IMR-90 (cell line): ENCODE measurements at regions of chr3 and their contacts with region 1.

Region 1: DNA sequence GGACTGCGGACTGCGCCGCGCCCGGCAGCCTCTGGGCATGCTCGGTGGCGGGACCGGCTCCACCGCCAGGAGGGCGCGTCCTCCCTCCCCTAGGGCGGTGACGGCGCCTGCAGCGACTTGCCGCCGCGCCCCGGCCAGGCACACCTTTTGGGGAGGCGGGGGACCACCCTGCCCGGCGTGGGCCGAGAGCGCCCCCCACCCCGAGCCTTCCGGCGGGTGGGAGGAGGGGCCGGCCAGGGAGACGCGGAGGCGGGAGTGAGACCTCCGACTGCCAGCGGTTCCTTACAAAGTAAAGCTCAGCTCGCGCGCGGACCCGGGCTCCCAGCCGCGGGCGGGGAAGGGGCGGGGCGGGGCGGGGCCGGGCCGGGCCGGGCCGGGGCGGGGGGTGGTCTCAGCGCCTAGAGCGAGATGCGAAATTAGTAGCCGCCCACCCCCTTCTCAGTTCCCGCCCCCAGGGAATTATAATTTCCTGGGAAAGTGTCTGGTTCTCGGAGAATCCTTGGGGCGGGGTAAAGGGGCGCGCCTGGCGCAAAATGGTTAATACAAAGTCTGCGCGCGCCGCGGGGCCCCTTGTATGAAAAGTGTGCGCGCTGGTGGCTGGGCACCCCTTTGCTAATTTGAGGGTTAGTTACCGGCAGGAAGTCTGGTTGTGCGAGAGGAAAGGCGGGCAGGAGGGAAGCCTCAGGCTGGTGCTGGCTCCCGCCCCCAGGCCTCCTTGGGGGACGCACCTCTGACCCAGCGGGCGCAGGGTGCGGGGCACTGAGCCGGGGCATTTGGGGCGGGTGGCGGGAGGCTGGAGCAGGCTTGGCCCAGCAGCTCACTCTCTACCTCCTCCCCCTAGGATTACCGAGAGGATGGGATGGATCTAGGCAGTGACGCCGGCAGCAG is 224.8 kb upstream of the IL12A start:
- DNase-seq: peak; percentile 84
- ATAC-seq: peak; percentile 68
- H3K4me3 ChIP-seq: peak overlapping the region; percentile 65
- H3K27ac ChIP-seq: peak overlapping the region; percentile 91
- H3K4me1 ChIP-seq: peaks cover 14% of the 10 kb centered on the region
- H3K27me3 ChIP-seq: no peaks in the 10 kb centered on the region
- CTCF ChIP-seq: no peak
- POLR2A ChIP-seq: peak; percentile 74
- RAD21 ChIP-seq: 0 out of 2 replicates have a peak, but pooled peaks have one; percentile 10

Region 2: DNA sequence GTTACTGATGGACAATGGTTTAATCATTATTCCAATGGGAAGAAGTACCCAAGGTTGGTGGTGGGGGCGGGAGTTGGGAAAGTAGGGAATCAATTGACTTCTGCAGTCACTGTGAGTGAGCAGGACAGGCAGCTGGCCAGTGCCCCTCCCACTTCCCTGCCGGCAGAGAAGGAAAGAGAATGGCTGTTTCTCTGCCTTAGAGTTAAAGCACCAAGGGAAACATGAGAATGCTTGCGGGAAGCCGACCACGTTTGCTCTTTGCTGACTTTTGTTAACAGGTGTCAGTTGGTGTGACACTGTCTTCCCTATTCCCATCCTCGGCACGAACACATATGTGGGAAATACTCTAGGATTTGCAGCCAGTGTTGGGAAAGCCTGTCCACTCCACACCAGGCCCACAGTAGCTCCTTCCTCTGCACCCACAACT is 995.5 kb before region 1 on chr3:
- CTCF ChIA-PET with region 1: no interaction called
- POLR2A ChIA-PET with region 1: no interaction called
- dilution Hi-C with region 1: no loop called
- in situ Hi-C with region 1: no loop called
- intact Hi-C with region 1: no loop called
- DNase-seq: peak; percentile 78
- ATAC-seq: peak; percentile 61
- H3K4me3 ChIP-seq: no peak overlapping the region
- H3K27ac ChIP-seq: peak overlapping the region; percentile 96
- H3K4me1 ChIP-seq: peaks cover 21% of the 10 kb centered on the region
- H3K27me3 ChIP-seq: no peaks in the 10 kb centered on the region
- CTCF ChIP-seq: 0 out of 2 replicates have a peak, but pooled peaks have one; percentile 0
- POLR2A ChIP-seq: no peak
- RAD21 ChIP-seq: no peak

Region 3: GRCh38 chr3:159322322-159322939 is 441.4 kb before region 1 on chr3:
- CTCF ChIA-PET with region 1: no interaction called
- POLR2A ChIA-PET with region 1: no interaction called
- dilution Hi-C with region 1: no loop called
- in situ Hi-C with region 1: no loop called
- intact Hi-C with region 1: loop called (anchors 2 kb)
- DNase-seq: peak; percentile 20
- ATAC-seq: peak; percentile 77
- H3K4me3 ChIP-seq: no peak overlapping the region
- H3K27ac ChIP-seq: no peak overlapping the region
- H3K4me1 ChIP-seq: no peaks in the 10 kb centered on the region
- H3K27me3 ChIP-seq: no peaks in the 10 kb centered on the region
- CTCF ChIP-seq: peak; percentile 72
- POLR2A ChIP-seq: no peak
- RAD21 ChIP-seq: peak; percentile 59

Region 4: DNA sequence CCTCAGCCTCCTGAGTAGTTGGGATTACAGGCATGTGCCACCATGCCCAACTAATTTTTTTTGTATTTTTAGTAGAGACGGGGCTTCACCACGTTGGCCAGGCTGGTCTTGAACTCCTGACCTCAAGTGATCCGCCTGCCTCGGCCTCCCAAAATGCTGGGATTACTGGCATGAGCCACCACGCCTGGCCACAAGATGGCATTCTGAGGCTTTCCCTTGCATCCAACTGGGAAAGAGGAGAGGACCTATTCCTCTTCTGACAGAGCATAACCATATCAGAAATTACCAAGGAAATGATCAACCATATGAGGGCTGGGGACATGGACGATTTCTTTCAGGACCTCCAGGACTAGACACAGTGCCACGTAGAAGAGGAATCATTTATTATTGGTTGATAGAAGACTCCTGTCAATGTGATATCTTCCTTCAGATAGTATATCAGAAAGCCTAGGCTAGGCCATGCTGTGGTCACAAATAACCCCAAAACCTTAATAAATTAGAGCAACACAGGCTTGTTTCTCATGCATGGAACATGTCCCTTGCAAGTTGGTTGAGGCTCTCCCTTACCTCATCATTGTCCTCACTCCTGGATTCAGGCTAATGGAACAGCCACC is 147.5 kb before region 1 on chr3:
- CTCF ChIA-PET with region 1: no interaction called
- POLR2A ChIA-PET with region 1: interaction called, 3 read pairs
- dilution Hi-C with region 1: no loop called
- in situ Hi-C with region 1: no loop called
- intact Hi-C with region 1: loop called (anchors 1 kb)
- DNase-seq: peak; percentile 68
- ATAC-seq: peak; percentile 70
- H3K4me3 ChIP-seq: no peak overlapping the region
- H3K27ac ChIP-seq: no peak overlapping the region
- H3K4me1 ChIP-seq: peaks cover 14% of the 10 kb centered on the region
- H3K27me3 ChIP-seq: no peaks in the 10 kb centered on the region
- CTCF ChIP-seq: peak; percentile 67
- POLR2A ChIP-seq: no peak
- RAD21 ChIP-seq: peak; percentile 82

Region 5: DNA sequence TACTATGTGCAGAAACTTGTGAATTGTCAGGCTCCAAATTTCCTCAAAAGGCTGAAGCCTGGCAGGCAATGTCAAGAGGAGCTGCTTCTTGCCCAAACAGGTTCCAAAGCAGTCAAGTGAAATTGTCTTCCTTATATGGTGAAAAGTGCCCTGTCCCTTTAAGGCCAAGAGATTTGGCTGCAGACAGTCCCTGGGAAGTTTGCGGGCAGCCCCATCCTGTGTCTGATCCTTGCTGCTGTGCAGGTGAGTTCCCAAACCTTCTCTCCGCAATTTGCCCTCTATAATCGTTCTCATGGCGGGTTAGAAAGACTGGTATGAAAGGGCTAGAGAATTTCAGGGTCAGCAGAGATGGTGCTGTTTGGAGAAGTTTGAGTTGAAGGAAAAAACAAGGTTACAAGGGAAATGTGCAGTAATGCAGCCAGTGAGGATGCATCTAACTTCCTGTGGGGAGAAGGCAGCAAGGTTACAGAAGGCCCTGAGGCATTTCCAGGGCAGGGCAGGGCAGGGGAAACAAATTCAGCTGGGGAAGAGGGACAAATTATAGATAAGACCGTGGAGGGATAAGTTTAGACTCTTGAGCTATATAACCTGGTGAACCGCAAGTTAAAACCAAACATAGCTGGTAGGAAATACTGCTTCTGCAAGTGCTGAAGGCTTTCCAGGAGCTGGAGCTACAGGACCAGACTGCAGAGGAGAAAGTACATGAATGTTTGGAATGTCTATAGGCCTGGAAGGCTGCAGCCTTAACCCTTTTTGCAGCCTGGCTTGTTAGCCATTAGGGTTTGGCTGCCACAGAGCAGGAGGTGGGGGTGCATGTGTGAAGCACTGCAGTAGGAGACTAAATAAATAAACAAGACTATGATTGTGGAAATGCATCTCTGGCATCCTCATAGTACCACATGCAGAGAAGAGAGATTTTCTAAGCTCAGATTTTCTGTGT is 31.4 kb before region 1 on chr3:
- CTCF ChIA-PET with region 1: interaction called, 3 read pairs
- POLR2A ChIA-PET with region 1: interaction called, 3 read pairs
- dilution Hi-C with region 1: no loop called
- in situ Hi-C with region 1: no loop called
- intact Hi-C with region 1: loop called (anchors 1 kb)
- DNase-seq: peak; percentile 86
- ATAC-seq: peak; percentile 82
- H3K4me3 ChIP-seq: peak overlapping the region; percentile 41; the same call in 1 of the 2 replicates
- H3K27ac ChIP-seq: peak overlapping the region; percentile 82
- H3K4me1 ChIP-seq: peaks cover 15% of the 10 kb centered on the region
- H3K27me3 ChIP-seq: no peaks in the 10 kb centered on the region
- CTCF ChIP-seq: no peak
- POLR2A ChIP-seq: no peak; the same call in 1 of the 2 replicates
- RAD21 ChIP-seq: peak; percentile 13; the same call in 1 of the 2 replicates

Region 6: DNA sequence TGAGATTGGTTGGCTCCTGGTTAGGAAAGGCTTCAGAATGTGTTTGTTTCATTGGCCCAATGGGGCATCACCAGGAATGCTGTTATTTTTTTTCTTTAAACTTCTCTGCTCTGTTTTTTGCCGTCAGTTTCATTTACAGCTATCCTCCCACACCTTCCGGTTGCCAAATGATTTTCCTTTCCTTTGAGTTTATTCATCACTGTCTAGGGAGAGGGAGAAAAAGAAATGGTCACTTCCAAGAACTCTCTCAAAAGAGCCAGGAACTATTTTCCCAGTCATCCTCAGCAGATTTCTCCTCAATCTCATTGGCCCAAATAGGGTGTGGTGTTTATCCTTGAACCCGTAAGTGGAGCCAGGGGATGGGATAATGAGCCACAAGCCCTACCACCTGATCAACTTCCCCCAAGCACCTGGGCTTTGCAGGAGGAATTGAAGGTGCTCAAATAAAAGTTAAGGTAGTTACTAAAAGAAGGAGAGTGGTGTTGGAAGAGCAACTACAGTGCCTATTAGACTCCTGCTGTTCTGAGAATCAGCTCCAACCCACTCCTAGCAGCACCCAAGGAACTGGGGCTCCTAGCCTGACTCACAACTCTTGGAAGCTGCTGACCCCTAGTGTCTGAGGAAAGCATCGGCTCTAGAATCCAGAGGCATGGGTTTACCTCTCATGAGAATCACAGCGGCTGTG is 41.0 kb after region 1 on chr3:
- CTCF ChIA-PET with region 1: interaction called, 12 read pairs
- POLR2A ChIA-PET with region 1: interaction called, 7 read pairs
- dilution Hi-C with region 1: no loop called
- in situ Hi-C with region 1: no loop called
- intact Hi-C with region 1: loop called (anchors 1 kb)
- DNase-seq: peak; percentile 92
- ATAC-seq: peak; percentile 93
- H3K4me3 ChIP-seq: no peak overlapping the region
- H3K27ac ChIP-seq: no peak overlapping the region
- H3K4me1 ChIP-seq: peaks cover 22% of the 10 kb centered on the region
- H3K27me3 ChIP-seq: no peaks in the 10 kb centered on the region
- CTCF ChIP-seq: peak; percentile 95
- POLR2A ChIP-seq: no peak
- RAD21 ChIP-seq: peak; percentile 98

Region 7: GRCh38 chr3:160413613-160414248 is 649.9 kb after region 1 on chr3:
- CTCF ChIA-PET with region 1: no interaction called
- POLR2A ChIA-PET with region 1: no interaction called
- dilution Hi-C with region 1: no loop called
- in situ Hi-C with region 1: no loop called
- intact Hi-C with region 1: loop called (anchors 10 kb)
- DNase-seq: peak; percentile 84
- ATAC-seq: peak; percentile 91
- H3K4me3 ChIP-seq: no peak overlapping the region
- H3K27ac ChIP-seq: no peak overlapping the region
- H3K4me1 ChIP-seq: peaks cover 3% of the 10 kb centered on the region
- H3K27me3 ChIP-seq: no peaks in the 10 kb centered on the region
- CTCF ChIP-seq: peak; percentile 89
- POLR2A ChIP-seq: no peak
- RAD21 ChIP-seq: peak; percentile 84